ENCODE measurements at regions of chr10 and their contacts with region 1.

Region 1: GRCh38 chr10:121572859-121573537 is 25.2 kb downstream of the FGFR2 start:
- DNase-seq: no peak
- H3K4me3 Mint-ChIP-seq: no peak overlapping the region
- H3K27ac Mint-ChIP-seq: no peak overlapping the region
- H3K4me1 Mint-ChIP-seq: no peaks in the 10 kb centered on the region
- H3K27me3 Mint-ChIP-seq: no peaks in the 10 kb centered on the region

Region 2: DNA sequence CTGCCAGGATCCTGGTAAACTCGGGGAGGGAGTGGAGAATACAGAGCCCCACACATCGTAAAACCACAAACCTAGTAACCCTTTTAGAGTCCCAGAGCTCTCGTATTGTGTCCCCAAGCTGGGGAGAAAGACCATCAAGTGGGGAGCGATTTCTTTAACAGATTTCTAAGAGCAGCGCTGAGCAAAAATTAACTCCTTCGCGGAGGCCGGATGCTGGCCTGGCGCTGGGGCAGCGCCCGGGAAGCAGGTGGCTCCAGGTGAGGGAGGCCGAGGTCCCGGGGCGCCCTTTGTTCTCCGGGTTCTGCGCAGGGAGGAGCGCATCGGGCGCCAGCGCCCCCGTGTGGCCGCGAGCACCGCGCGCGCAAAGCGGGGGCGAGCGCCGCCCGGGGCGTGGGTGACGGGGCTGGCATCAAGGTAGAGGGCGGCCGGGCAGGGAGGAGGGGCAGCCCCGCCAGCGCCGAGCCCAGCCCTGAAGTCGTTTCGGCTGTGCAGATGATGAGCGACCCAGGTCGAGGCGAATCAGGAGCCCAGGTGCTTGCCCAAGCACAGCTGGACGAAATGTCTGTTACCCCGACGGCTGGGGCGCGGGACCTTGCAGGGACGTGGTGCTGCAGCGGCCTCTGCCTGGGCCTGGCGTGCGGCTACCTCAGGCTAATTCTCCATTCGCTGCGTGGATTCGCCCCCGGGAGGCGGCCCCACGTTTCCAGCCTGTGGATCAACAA is 35.6 kb after region 1 on chr10:
- CTCF ChIA-PET with region 1: no interaction called
- POLR2A ChIA-PET with region 1: interaction called, 12 read pairs
- DNase-seq: peak; percentile 30
- H3K4me3 Mint-ChIP-seq: no peak overlapping the region
- H3K27ac Mint-ChIP-seq: no peak overlapping the region
- H3K4me1 Mint-ChIP-seq: no peaks in the 10 kb centered on the region
- H3K27me3 Mint-ChIP-seq: peaks cover 5% of the 10 kb centered on the region